Mammary epithelial cell (primary cell): ENCODE measurements at regions of chr20 and their contacts with region 1.

Region 1: DNA sequence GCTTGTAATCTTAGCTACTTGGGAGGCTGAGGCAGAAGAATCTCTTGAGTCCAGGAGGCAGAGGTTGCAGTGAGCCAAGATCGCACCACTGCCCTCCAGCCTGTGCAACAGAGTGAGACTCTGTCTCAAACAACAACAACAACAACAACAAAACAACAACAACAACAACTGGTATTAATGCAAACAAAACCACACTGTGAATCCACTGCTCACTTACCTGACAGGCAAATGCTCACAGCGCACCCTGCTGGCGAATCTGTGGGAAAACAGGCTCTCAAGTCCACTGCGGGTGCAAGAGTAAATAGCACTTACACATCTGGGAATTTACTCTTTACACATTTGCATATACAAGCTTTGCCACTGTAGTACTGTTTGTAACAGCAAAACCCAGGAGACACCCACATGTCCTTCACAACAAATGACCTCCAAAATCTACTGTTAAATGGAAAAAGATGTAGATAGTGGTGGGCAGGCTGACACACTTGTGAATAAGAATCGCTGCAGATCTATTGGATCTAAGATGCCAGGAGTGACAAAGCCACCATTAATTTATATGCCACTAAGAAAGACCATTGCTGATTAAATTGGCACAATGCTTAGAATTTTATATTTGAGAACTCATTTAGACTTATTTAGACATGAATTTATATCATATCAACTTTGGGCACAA is 29.3 kb downstream of the NSFL1C start:
- DNase-seq: peak; percentile 57
- H3K4me3 ChIP-seq: no peak overlapping the region
- H3K27ac ChIP-seq: no peak overlapping the region
- H3K4me1 ChIP-seq: peaks cover 13% of the 10 kb centered on the region
- H3K27me3 ChIP-seq: no peaks in the 10 kb centered on the region
- CTCF ChIP-seq: peak; percentile 85 to 93

Region 2: DNA sequence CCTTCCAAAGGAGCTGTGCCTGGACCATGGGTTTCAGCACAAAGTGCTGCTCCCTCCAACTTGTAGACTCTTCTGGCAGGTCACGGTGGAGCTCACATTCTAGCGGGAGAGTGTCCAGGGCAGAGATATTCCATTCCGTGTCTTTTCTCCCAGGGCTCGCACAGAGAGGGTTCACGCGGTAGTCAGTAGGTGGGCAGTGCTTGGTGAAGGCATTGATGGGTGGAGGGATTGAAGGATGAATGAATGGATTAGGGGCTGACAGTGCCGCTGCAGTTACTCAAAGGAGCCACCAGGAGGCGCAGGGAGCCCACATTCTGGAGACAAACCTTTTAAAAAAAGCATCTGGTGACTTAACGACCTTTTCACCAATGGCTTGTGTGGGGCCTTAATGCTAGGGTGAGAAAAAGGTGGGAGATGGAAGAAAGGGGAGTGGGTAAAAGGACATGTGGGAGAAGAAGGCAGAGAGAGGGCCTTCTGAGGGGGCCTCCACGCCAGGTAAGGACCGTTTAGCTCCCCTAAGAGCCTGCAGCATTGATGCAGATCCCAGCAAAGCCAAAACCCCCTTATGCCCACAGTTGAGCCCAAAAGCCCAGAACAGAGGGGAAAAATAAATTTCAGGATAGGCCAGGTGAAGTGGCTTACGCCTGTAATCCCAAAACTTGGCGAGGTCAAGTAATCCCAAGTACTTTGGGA is 621.3 kb before region 1 on chr20:
- CTCF ChIA-PET with region 1: no interaction called
- dilution Hi-C with region 1: no loop called
- in situ Hi-C with region 1: no loop called
- intact Hi-C with region 1: loop called (anchors 2 kb)
- DNase-seq: peak; percentile 23
- H3K4me3 ChIP-seq: no peak overlapping the region
- H3K27ac ChIP-seq: no peak overlapping the region
- H3K4me1 ChIP-seq: no peaks in the 10 kb centered on the region
- H3K27me3 ChIP-seq: no peaks in the 10 kb centered on the region
- CTCF ChIP-seq: peak; percentile 94 to 96

Region 3: DNA sequence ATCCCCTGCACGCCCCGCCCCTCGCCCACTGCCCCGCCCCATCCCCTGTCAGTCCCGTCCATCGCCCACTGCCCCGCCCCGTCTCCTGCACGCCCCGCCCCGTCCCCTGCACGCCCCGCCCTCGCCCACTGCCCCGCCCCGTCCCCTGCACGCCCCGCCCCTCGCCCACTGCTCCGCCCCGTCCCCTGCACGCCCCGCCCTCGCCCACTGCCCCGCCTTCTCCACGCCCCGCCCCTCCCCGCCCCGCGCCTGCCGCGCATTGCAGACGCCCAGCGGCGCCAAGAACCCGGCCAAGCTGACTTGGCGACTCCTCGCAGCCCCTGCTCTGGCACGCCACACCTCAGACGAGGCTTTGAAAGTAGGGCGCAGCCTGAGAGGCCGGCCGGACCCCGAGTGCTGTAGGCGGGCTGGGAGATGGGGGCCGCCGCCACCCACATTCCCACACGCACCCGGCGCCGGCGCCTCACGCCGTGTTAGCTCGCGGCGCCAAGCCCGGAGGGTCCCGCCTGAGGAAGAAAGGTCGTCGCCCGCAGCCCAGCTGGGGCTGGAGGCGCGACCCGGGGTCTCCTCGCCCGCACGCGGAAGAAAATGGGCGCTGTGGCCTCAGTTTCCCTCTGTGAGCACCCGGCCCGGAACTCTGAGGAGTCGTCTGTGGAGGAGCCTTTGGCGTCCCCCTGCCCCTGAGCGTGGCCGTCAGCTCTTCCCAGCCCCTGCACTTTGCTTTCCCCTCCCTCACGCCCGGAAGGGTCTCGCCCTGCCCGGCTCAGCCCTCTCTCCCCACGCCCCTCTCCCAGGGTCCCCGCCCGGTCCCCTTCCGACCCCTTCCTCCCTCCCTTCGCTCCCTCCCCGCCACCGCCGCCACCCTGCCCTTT is 211.4 kb before region 1 on chr20 and contains the start of gene RAD21L1:
- CTCF ChIA-PET with region 1: no interaction called
- dilution Hi-C with region 1: no loop called
- in situ Hi-C with region 1: no loop called
- intact Hi-C with region 1: loop called (anchors 5 kb)
- DNase-seq: peak; percentile 52
- H3K4me3 ChIP-seq: peak within 1 kb of the TSS; percentile 54 to 57 (median 56)
- H3K27ac ChIP-seq: no peak within 1 kb of the TSS
- H3K4me1 ChIP-seq: peaks cover 9% of the 10 kb centered on the region
- H3K27me3 ChIP-seq: peaks cover 11% of the 10 kb centered on the region
- CTCF ChIP-seq: no peak
- total RNA-seq, gene RAD21L1: not detected

Region 4: GRCh38 chr20:1325173-1326030 is 112.0 kb before region 1 on chr20:
- CTCF ChIA-PET with region 1: no interaction called
- dilution Hi-C with region 1: no loop called
- in situ Hi-C with region 1: loop called in 1 of 2 experiments (anchors 5 kb)
- intact Hi-C with region 1: loop called (anchors 1 kb)
- DNase-seq: peak; percentile 92
- H3K4me3 ChIP-seq: peak overlapping the region; percentile 62 to 91 (median 80)
- H3K27ac ChIP-seq: peak overlapping the region; percentile 99
- H3K4me1 ChIP-seq: peaks cover 53% of the 10 kb centered on the region
- H3K27me3 ChIP-seq: no peaks in the 10 kb centered on the region
- CTCF ChIP-seq: no peak

Region 5: GRCh38 chr20:1392823-1393506 is 44.4 kb before region 1 on chr20 and contains the start of gene FKBP1A:
- CTCF ChIA-PET with region 1: no interaction called
- dilution Hi-C with region 1: loop called (anchors 5 kb)
- in situ Hi-C with region 1: no loop called
- intact Hi-C with region 1: loop called (anchors 1 kb)
- DNase-seq: peak; percentile 92
- H3K4me3 ChIP-seq: peak within 1 kb of the TSS; percentile 57 to 84 (median 76)
- H3K27ac ChIP-seq: peak within 1 kb of the TSS; percentile 57
- H3K4me1 ChIP-seq: peaks cover 43% of the 10 kb centered on the region
- H3K27me3 ChIP-seq: no peaks in the 10 kb centered on the region
- CTCF ChIP-seq: no peak
- total RNA-seq, gene FKBP1A: 139 to 425 TPM

Region 6: GRCh38 chr20:1466211-1467081 is 29.1 kb after region 1 on chr20 and contains the start of gene NSFL1C:
- CTCF ChIA-PET with region 1: interaction called, 4 read pairs
- dilution Hi-C with region 1: no loop called
- in situ Hi-C with region 1: no loop called
- intact Hi-C with region 1: loop called (anchors 1 kb)
- DNase-seq: peak; percentile 93
- H3K4me3 ChIP-seq: peak within 1 kb of the TSS; percentile 83 to 95 (median 83)
- H3K27ac ChIP-seq: peak within 1 kb of the TSS; percentile 94
- H3K4me1 ChIP-seq: peaks cover 39% of the 10 kb centered on the region
- H3K27me3 ChIP-seq: no peaks in the 10 kb centered on the region
- CTCF ChIP-seq: peak; percentile 70 to 92
- total RNA-seq, gene NSFL1C: 46.3 to 105 TPM

Region 7: GRCh38 chr20:1491860-1492642 is 54.7 kb after region 1 on chr20:
- CTCF ChIA-PET with region 1: no interaction called
- dilution Hi-C with region 1: no loop called
- in situ Hi-C with region 1: no loop called
- intact Hi-C with region 1: no loop called
- DNase-seq: no peak
- H3K4me3 ChIP-seq: no peak overlapping the region
- H3K27ac ChIP-seq: no peak overlapping the region
- H3K4me1 ChIP-seq: peaks cover 29% of the 10 kb centered on the region
- H3K27me3 ChIP-seq: no peaks in the 10 kb centered on the region
- CTCF ChIP-seq: no peak